Activated naive CD8-positive, alpha-beta T cell treated with anti-CD3 and anti-CD28 coated beads, Interleukin-2, amount 10 ng/mL, durations not matched to agents 7 days and 5 days (primary cell): ENCODE measurements at regions of chr17 and their contacts with region 1.

Region 1: DNA sequence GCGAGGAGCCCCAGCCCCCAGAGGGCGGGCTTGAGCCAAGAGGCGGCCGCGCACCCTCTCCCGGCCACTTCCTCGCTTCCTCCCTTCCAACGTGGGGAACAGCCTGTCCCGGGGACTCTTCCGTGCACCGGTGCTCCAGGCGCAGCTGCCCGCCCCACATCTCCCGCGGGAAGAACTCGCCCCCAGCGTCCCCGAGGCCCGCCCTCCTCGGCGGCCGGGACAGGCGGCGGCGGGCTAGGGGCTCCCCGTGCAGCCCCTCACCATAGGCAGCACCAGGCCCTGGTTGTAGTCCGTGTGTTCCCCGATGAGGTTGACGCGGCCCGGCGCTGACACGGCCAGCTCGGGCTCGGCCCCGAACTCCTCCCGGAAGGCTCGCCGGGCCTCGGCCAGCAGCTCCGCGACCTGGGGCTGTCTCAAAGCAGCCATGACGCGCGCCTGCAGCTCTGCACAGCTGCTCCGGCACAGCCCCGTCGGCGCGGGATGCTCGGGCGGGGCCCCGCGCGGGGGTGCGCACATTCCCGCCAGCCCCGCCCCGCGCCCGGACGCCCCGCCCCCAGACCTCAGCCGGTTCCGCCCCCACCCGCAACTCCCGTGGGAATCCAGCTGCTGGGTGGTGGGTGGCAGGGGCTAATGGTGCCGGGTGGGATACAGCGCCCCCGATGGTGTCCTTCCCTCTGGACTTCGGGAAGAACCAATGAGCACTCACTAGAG is at the start of gene GALK1:
- DNase-seq: peak; percentile 83
- ATAC-seq: peak; percentile 97
- H3K4me3 Mint-ChIP-seq: peak within 1 kb of the TSS; percentile 87
- H3K27ac Mint-ChIP-seq: peak within 1 kb of the TSS; percentile 77
- H3K4me1 Mint-ChIP-seq: peaks cover 8% of the 10 kb centered on the region
- H3K27me3 Mint-ChIP-seq: peaks cover 3% of the 10 kb centered on the region
- total RNA-seq, gene GALK1: 50.4 to 53.0 TPM

Region 2: DNA sequence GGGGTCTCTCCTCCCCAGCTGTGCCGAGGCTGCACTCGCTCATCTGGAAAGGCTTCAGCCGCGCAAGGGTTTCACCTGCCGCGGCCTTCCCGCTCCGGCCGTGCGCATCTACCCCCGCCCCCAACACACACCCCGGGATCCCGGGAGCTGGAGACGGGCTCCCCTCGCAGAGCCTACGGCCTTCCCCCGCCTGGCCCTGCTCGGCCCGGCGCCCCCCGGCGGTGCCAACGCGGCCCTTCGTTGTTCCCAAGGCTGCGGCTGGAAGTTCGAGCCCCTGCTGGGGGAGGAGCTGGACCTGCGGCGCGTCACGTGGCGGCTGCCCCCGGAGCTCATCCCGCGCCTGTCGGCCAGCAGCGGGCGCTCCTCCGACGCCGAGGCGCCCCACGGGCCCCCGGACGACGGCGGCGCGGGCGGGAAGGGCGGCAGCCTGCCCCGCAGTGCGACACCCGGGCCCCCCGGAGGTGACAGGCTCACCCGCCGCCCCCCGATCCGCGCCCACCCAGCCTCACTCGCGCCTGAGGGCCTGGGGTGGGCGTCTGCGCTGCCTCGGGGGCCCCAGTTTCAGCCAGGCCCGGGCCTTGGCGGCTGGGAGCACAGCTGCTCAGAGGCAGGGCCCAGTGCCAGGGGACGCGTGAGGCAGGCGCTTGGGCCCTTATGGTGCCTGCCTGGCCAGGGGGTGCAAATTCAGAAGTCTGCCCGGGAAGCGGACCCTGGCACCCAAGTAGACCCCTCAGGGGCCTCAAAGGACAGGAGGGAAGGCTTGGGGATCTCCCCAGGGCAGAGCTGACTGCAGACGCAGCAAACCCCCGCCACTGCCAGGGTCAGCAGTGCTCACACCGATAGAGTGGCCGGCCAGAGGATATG is 11.1 kb before region 1 on chr17:
- POLR2A ChIA-PET with region 1: interaction called, 32 read pairs
- DNase-seq: peak; percentile 89
- ATAC-seq: peak; percentile 81
- H3K4me3 Mint-ChIP-seq: peak overlapping the region; percentile 54
- H3K27ac Mint-ChIP-seq: no peak overlapping the region
- H3K4me1 Mint-ChIP-seq: peaks cover 8% of the 10 kb centered on the region
- H3K27me3 Mint-ChIP-seq: no peaks in the 10 kb centered on the region